HepG2 (cell line): ENCODE measurements at regions of chr2 and their contacts with region 1.

Region 1: DNA sequence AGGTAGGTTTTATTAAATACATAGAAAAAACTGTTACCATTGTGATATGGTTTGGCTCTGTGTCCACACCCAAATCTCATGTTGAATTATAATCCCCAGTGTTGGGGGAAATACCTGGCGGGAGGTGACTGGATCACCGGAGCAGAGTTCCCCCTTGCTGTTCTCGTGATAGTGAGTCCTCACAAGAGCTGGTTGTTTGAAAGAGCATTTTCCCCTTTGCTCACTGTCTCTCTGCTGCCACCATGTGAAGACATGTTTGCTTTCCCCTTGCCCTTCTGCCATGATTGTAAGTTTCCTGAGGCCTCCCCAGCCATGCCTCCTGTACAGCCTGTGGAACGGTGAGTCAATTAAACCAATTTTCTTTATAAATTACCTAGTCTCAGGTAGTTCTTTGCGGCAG is 352.7 kb upstream of the SLC39A10 start:
- DNase-seq: peak; percentile 35
- ATAC-seq: peak; percentile 83
- H3K4me3 ChIP-seq: no peak overlapping the region
- H3K27ac ChIP-seq: no peak overlapping the region
- H3K4me1 ChIP-seq: peaks cover 5% of the 10 kb centered on the region; the same call in 1 of the 2 replicates
- H3K27me3 ChIP-seq: no peaks in the 10 kb centered on the region
- CTCF ChIP-seq: peak; percentile 56
- EP300 ChIP-seq: no peak
- POLR2A ChIP-seq: no peak
- RAD21 ChIP-seq: no peak

Region 2: DNA sequence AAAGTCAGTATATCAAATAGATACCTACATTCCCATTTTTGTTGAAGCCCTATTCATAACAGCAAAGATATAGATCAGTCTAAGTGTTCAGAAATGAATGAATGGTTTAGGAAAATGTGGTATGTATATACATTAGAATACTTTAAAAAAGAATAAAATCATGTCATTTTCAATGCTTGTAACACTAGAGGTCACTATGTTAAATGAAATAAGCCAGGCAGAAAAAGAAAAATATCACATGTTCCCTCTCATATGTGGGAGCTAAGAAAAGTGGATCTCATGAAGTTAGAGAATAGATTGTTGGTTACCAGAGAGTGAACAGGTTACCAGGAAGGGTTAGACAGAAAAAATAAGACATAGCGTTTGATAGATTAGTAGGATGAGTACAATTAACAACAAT is 758.3 kb before region 1 on chr2:
- CTCF ChIA-PET with region 1: no interaction called
- POLR2A ChIA-PET with region 1: no interaction called
- in situ Hi-C with region 1: no loop called
- intact Hi-C with region 1: loop called (anchors 5 kb)
- DNase-seq: peak; percentile 4
- ATAC-seq: no peak
- H3K4me3 ChIP-seq: no peak overlapping the region
- H3K27ac ChIP-seq: no peak overlapping the region
- H3K4me1 ChIP-seq: no peaks in the 10 kb centered on the region
- H3K27me3 ChIP-seq: no peaks in the 10 kb centered on the region
- CTCF ChIP-seq: no peak; the same call in 1 of the 2 replicates
- EP300 ChIP-seq: no peak
- POLR2A ChIP-seq: no peak
- RAD21 ChIP-seq: no peak

Region 3: GRCh38 chr2:195316486-195316885 is 12.2 kb after region 1 on chr2:
- CTCF ChIA-PET with region 1: no interaction called
- POLR2A ChIA-PET with region 1: no interaction called
- in situ Hi-C with region 1: no loop called
- intact Hi-C with region 1: no loop called
- DNase-seq: no peak
- ATAC-seq: no peak
- H3K4me3 ChIP-seq: no peak overlapping the region
- H3K27ac ChIP-seq: no peak overlapping the region
- H3K4me1 ChIP-seq: no peaks in the 10 kb centered on the region
- H3K27me3 ChIP-seq: no peaks in the 10 kb centered on the region
- CTCF ChIP-seq: no peak
- EP300 ChIP-seq: no peak
- POLR2A ChIP-seq: no peak
- RAD21 ChIP-seq: no peak

Region 4: DNA sequence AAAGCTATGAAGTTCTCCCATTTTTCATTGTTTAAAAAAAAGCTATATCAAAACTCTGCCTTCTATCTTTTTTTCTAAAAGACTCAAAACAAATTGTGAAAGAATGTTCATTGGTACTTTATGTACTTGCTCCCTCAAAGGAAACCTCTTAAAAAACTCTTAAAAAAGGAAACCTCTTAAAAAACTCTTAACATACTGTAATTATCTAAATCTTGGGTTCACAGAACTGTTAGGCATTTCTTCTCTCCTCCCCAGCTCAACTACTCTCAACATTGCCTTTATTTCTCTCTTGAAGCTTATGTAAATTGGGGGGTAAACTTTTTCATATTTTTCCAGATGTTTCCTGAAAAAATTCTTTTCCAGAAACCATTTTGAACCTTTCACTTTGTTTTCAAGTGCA is 22.2 kb after region 1 on chr2:
- CTCF ChIA-PET with region 1: no interaction called
- POLR2A ChIA-PET with region 1: no interaction called
- in situ Hi-C with region 1: no loop called
- intact Hi-C with region 1: loop called (anchors 1 kb)
- DNase-seq: no peak
- ATAC-seq: no peak
- H3K4me3 ChIP-seq: no peak overlapping the region
- H3K27ac ChIP-seq: no peak overlapping the region
- H3K4me1 ChIP-seq: no peaks in the 10 kb centered on the region
- H3K27me3 ChIP-seq: no peaks in the 10 kb centered on the region; a peak in 1 of 5 replicates
- CTCF ChIP-seq: no peak
- EP300 ChIP-seq: no peak
- POLR2A ChIP-seq: no peak
- RAD21 ChIP-seq: no peak